GM23248 (cell line): ENCODE measurements at regions of chr5 and their contacts with region 1.

Region 1: DNA sequence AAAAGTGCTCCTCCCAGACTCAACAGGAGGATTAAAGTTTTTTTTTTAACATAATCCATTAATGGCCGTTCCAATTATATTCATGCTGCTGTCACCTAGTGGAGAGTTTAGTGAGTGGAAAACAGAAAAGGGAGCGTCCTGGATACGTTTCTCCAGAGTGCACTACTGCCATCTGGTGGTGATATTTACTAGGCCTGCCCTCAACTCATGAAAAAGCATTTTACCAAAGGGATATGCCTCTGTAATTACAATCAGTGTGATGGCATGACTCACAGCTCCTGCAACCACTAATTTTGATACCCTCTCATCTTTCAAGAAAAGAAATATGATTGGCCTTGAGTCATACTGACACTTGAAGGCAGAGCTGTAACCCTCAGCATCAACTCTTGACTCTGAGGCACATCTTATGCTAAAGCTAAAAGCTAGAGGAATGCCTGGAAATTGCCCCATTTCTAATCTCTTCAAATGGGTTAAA is 20.0 kb downstream of the MINAR2 start:
- DNase-seq: peak; percentile 91
- H3K4me3 ChIP-seq: no peak overlapping the region
- H3K27ac ChIP-seq: no peak overlapping the region
- H3K4me1 ChIP-seq: no peaks in the 10 kb centered on the region
- H3K27me3 ChIP-seq: no peaks in the 10 kb centered on the region

Region 2: GRCh38 chr5:128913551-128913950 is 854.4 kb before region 1 on chr5:
- in situ Hi-C with region 1: loop called (anchors 10 kb)
- DNase-seq: no peak
- H3K4me3 ChIP-seq: no peak overlapping the region
- H3K27ac ChIP-seq: no peak overlapping the region
- H3K4me1 ChIP-seq: no peaks in the 10 kb centered on the region
- H3K27me3 ChIP-seq: no peaks in the 10 kb centered on the region

Region 3: DNA sequence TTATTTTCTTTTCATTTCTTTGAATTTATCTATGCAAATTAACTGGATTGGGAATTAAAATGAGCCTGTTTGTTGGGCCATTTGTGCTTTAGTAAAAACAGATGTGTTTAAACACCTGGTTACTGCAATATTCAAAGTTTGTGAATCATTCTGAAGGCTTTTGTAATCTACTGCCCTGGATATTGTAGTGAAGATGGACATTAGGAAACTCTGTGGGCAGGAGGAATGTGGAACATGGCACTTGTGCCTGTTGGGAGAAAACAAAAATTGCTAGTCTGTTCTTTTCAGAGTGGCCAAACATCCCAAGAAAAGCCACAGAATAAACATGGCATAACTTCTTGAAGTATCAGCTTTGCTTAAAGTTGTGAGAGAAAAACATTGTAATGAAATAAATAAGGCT is 177.1 kb after region 1 on chr5:
- in situ Hi-C with region 1: no loop called
- DNase-seq: peak; percentile 61
- H3K4me3 ChIP-seq: no peak overlapping the region
- H3K27ac ChIP-seq: no peak overlapping the region
- H3K4me1 ChIP-seq: peaks cover 6% of the 10 kb centered on the region
- H3K27me3 ChIP-seq: no peaks in the 10 kb centered on the region